ENCODE measurements at regions of chr4 and their contacts with region 1.

Region 1: GRCh38 chr4:40897557-40898203 is 147.9 kb downstream of the NSUN7 start:
- DNase-seq: no peak
- H3K4me3 ChIP-seq: no peak overlapping the region
- CTCF ChIP-seq: peak; percentile 81

Region 2: GRCh38 chr4:40736910-40737309 is 160.8 kb before region 1 on chr4:
- CTCF ChIA-PET with region 1: interaction called, 55 read pairs
- POLR2A ChIA-PET with region 1: no interaction called
- DNase-seq: no peak
- H3K4me3 ChIP-seq: no peak overlapping the region
- CTCF ChIP-seq: peak; percentile 11

Region 3: DNA sequence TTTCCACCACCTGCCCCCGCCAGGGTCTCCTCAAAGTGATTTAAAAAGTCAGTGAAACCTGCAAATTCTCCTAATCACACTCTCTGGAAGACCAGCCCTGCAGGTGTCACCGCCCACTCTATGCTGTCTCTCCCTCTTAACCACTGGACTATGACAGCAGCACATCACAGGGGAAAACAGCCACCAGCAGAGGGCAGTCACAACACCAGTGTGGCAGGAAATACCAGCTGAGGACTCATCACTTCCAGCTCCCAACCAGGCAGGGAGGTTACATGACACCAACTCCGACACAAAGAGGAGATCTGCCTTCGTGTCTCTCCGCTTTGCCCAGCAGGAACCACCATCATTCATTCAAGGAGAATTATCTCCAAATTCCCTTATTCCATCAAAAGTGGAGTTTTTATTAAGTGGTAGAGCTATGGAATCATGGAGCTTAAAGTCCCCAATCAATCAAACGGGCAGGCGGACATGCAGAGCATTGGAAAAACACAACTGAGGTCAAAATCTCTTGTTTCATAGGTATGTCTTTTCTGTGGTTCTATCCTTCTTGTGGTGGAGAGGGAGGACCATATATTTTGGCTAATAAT is 56.6 kb before region 1 on chr4:
- CTCF ChIA-PET with region 1: interaction called, 15 read pairs
- POLR2A ChIA-PET with region 1: no interaction called
- DNase-seq: peak; percentile 50
- H3K4me3 ChIP-seq: no peak overlapping the region
- CTCF ChIP-seq: peak; percentile 85

Region 4: GRCh38 chr4:40865696-40866095 is 32.0 kb before region 1 on chr4:
- CTCF ChIA-PET with region 1: interaction called, 13 read pairs
- POLR2A ChIA-PET with region 1: interaction called, 4 read pairs
- DNase-seq: no peak
- H3K4me3 ChIP-seq: no peak overlapping the region
- CTCF ChIP-seq: no peak

Region 5: DNA sequence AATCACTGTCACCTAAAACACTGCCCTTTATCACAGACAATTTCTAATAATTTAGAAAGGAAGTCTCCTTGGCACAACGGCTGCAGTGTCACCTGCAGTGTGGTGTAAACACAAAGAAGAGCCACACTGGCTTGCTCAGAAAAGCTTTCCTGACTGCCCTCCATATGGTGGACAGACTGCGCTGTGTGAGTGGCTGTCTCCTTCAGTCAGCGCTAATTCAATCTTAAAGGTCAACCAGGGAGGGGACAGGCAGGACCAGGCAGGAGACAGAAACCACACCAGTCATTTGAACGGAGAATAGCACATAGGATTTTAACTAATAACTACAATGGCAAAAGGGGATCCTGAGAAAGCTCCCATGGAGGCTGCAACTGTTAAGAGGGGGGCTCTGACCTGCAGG is 15.8 kb before region 1 on chr4:
- CTCF ChIA-PET with region 1: interaction called, 26 read pairs
- POLR2A ChIA-PET with region 1: no interaction called
- DNase-seq: no peak
- H3K4me3 ChIP-seq: no peak overlapping the region
- CTCF ChIP-seq: no peak

Region 6: DNA sequence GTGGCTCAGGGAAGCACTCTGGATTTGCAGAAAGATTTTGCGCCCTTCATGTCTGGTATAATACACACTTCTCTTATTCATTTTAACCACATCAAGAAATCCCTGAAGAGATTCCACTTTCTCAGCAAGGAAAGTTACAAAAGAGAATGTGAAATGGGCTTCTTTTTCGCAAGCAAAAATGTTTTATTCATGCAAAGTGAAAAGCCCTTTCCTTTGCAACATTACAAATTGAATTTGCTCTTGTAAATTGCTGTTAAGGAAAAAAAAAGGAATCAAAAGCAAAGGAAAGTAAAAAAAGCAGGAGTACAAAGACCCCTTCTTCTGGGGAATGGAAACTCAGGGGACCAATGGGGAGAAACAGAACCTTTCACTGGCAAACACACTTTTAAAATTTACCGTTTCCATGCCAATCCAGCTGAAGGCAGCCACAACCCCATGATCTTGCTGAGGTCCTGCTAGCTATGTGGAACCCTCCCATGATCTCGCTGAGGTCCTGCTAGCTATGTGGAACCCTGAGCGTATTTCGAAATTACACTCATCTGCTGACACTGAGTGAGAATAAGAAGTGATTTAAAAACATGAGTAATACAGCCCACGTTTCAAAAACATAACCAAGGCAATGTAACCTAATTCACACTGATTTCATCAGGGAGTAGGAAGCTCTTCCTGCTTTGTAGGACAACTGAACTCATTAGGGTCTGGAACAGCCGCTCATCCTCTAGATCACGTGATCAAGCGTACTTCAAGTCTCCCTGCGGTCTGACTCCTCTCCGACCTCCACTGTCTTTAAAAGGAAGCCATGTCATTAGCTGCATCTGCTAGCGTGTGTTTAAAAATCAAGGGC is 10.2 kb before region 1 on chr4:
- CTCF ChIA-PET with region 1: interaction called, 50 read pairs
- POLR2A ChIA-PET with region 1: interaction called, 3 read pairs
- DNase-seq: peak; percentile 80
- H3K4me3 ChIP-seq: no peak overlapping the region
- CTCF ChIP-seq: no peak

Region 7: GRCh38 chr4:40908702-40909362 is 11.2 kb after region 1 on chr4:
- CTCF ChIA-PET with region 1: interaction called, 126 read pairs
- POLR2A ChIA-PET with region 1: no interaction called
- DNase-seq: peak; percentile 7
- H3K4me3 ChIP-seq: no peak overlapping the region
- CTCF ChIP-seq: peak; percentile 87

Region 8: DNA sequence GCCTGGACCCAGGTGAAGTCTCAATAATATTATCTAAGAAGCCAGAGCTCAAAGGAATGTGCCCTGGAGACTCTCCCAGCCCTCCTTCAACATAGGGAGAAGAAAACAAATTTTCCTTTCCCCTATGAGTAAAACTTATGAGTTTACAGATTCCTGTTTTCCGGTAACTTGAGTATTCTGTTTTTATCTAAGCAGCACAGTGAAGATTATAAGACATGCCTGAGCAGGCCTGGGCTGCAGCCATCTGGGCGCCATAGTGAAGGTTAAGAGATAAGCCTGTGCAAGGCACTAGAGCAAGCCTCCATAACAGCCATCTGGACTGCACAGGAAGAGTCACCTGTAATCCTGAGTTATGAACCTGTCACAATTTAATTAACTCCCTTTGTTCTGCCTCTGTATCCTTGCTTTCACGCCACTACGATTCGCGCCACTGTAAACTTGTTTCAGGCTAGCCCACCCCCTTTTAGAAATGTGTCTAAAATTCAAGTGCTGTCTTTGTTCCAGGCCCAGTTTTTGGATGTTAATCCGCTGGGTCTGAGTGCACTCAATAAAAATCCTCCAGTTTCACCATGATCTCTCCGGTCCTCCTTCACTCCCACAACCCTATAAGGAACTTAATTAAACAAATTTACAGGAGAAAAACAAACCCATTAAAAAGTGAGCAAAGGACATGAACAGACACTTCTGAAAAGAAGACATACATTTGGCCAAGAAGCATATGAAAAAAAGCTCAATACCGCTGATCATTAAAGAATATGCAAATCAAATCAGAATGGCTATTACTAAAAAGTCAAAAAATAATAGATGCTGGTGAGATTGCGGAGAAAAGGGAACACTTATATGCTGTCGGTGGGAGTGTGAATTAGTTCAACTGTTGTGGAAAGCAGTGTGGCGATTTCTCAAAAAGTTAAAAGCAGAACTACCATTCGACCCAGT is 127.1 kb after region 1 on chr4:
- CTCF ChIA-PET with region 1: no interaction called
- POLR2A ChIA-PET with region 1: no interaction called
- DNase-seq: no peak
- H3K4me3 ChIP-seq: no peak overlapping the region
- CTCF ChIP-seq: no peak